Activated CD8-positive, alpha-beta T cell treated with anti-CD3 and anti-CD28 coated beads, Interleukin-2, amount 10 ng/mL, durations not matched to agents 7 days and 5 days (primary cell): ENCODE measurements at regions of chr2 and their contacts with region 1.

Region 1: GRCh38 chr2:136059036-136059472 is 58.9 kb downstream of the CXCR4 start:
- DNase-seq: no peak
- ATAC-seq: no peak
- H3K4me3 Mint-ChIP-seq: no peak overlapping the region
- H3K27ac Mint-ChIP-seq: no peak overlapping the region
- H3K4me1 Mint-ChIP-seq: peaks cover 87% of the 10 kb centered on the region
- H3K27me3 Mint-ChIP-seq: no peaks in the 10 kb centered on the region

Region 2: DNA sequence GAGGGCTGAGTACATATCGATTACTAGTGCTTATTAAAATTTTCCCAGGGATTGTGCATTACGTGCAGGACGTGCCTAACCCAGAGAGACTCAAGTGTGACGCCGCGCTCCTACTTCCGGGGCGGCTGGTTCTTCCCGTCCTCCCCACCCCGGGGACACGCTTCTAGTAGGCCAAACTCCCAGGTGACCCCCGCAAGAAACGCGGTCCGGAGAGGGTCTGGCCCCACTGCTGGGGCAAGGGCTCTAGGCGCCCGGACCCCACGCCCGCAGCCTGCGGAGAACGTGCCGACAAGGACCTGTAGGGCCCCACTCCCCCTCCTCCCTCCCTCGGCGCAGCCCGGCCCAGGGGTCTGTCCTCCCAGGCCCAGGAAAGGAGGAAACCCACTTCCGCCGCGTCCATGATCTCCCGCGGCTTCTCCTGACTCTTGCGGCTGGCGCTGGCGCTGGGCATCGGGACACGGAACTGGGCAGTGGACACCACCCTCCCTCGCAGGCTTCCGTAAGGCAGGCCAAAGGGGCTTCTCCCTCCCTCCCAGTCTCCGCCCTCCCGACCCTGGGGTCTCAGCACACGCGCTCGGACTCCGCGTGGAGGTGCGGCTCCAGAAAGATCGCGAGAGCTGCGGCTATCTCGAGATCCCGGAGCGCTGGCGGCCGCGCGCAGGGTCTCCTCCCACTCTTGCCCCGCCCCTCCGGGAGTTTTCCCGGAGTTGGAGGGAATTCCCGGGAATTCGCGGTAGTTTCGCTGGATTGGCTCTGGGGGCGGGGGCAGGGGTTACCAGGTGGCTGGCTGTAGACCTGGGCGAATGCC is 73.8 kb before region 1 on chr2 and contains the start of gene DARS1:
- CTCF ChIA-PET with region 1: interaction called, 4 read pairs
- POLR2A ChIA-PET with region 1: interaction called, 18 read pairs
- DNase-seq: peak; percentile 89
- ATAC-seq: peak; percentile 86
- H3K4me3 Mint-ChIP-seq: peak within 1 kb of the TSS; percentile 89
- H3K27ac Mint-ChIP-seq: peak within 1 kb of the TSS; percentile 98
- H3K4me1 Mint-ChIP-seq: peaks cover 55% of the 10 kb centered on the region
- H3K27me3 Mint-ChIP-seq: no peaks in the 10 kb centered on the region
- total RNA-seq, gene DARS1: 139 to 148 TPM

Region 3: GRCh38 chr2:136008205-136008865 is 50.7 kb before region 1 on chr2:
- CTCF ChIA-PET with region 1: interaction called, 5 read pairs
- POLR2A ChIA-PET with region 1: interaction called, 19 read pairs
- DNase-seq: peak; percentile 90
- ATAC-seq: peak; percentile 96
- H3K4me3 Mint-ChIP-seq: peak overlapping the region; percentile 53
- H3K27ac Mint-ChIP-seq: peak overlapping the region; percentile 99
- H3K4me1 Mint-ChIP-seq: peaks cover 63% of the 10 kb centered on the region
- H3K27me3 Mint-ChIP-seq: no peaks in the 10 kb centered on the region

Region 4: GRCh38 chr2:136107051-136108033 is 48.3 kb after region 1 on chr2:
- CTCF ChIA-PET with region 1: interaction called, 16 read pairs
- POLR2A ChIA-PET with region 1: interaction called, 4 read pairs
- DNase-seq: no peak
- ATAC-seq: no peak
- H3K4me3 Mint-ChIP-seq: no peak overlapping the region
- H3K27ac Mint-ChIP-seq: no peak overlapping the region
- H3K4me1 Mint-ChIP-seq: peaks cover 14% of the 10 kb centered on the region
- H3K27me3 Mint-ChIP-seq: no peaks in the 10 kb centered on the region

Region 5: DNA sequence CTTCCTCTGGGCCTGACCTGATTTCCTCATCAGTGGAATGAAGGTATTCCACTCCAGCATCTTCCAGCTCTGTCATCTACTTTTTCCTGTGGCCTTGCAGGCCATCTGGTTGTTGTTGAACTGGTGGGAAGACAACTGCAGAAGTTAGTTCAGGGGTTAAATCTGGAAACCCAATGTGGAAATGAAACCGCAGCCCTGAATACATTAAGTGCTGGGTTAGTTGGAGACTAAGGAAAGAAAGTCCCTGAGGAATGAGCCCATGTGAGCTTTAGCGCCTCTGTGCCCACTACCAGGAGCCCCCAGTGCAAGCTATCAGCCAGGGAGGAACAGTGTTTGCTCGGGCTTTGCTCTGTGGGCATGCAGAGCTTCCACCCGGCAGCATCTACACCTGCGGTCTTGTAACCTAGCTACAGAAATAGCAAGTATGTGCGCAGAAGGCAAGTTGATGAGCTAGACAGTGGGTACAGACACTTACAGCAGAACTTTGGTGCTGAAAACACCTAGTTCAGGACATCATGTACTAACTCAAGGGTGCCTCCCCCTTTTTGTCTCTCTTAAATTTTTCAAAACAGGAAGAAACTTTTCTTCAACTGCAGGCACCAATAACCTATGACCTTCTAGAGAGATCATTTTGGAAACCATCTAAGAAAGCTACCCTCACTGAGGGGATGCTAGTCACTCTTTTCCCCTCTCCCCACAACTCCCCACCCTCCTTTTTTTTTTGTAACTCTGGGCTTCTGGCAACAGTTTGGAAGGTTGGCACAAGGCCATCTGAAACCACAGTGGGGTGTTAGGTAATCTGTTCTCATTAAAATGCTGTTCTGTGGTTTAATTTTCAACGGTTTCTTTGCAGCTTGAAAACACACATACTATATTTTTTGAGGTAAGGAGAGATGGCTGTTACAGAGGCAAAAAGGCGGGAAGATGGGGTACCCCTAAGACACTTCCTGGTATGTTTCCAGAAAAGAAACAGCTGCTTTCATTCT is 77.2 kb after region 1 on chr2:
- CTCF ChIA-PET with region 1: interaction called, 6 read pairs
- POLR2A ChIA-PET with region 1: interaction called, 34 read pairs
- DNase-seq: peak; percentile 86
- ATAC-seq: peak; percentile 71
- H3K4me3 Mint-ChIP-seq: peak overlapping the region; percentile 44
- H3K27ac Mint-ChIP-seq: peak overlapping the region; percentile 95
- H3K4me1 Mint-ChIP-seq: peaks cover 91% of the 10 kb centered on the region
- H3K27me3 Mint-ChIP-seq: peaks cover 11% of the 10 kb centered on the region